Activated CD4-positive, alpha-beta memory T cell treated with anti-CD3 and anti-CD28 coated beads for 36 hours (primary cell): ENCODE measurements at regions of chr2 and their contacts with region 1.

Region 1: DNA sequence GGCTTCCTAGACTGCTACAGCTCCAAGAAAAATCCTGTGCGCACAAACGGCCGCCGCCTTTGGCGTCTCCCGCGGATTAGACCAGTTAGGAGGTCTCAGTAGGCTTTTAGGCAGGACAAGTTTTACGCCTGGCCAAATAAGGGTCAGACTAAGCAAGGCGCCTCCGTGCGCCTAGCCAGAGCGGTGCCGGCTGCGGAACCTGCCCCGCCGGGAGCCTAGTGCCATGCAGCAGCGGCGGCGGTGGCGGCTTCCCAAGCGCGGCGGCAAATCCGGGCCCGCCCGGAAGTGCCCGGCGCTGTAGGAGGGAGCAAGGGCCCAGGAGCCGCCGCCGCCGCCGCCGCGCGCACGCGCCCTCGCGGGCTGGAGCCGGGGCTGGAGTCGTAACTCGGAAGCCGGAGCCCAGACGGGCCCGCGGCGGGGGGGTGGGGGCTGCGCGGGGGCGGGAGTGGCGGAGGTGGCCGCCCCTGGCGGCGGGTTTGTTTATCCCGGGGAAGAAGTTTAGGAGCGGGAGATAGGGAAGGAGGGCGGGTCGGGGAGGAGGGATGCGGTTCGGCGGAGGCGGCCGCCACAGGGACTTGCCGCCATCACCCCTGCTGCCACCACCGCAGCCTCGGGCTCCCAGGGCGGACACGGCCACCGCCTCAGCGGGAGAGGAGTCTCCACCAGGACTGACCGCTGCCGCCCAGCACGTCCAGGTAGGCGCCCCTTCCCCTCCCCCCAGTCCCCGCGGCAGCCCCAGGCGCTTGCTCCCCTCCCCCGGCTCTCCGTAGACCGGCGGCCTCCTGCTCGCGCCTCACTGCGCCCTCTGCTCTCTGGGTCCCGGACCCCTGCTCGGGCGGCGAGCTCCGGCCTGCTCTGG is at the start of gene SPOPL:
- DNase-seq: peak; percentile 90
- H3K4me3 Mint-ChIP-seq: peak within 1 kb of the TSS; percentile 99
- H3K27ac Mint-ChIP-seq: peak within 1 kb of the TSS; percentile 86
- H3K4me1 Mint-ChIP-seq: peaks cover 39% of the 10 kb centered on the region
- H3K27me3 Mint-ChIP-seq: no peaks in the 10 kb centered on the region
- total RNA-seq, gene SPOPL: 10.6 to 12.3 TPM

Region 2: GRCh38 chr2:137947728-137948336 is 553.8 kb before region 1 on chr2:
- CTCF ChIA-PET with region 1: no interaction called
- POLR2A ChIA-PET with region 1: no interaction called
- intact Hi-C with region 1: loop called (anchors 10 kb)
- DNase-seq: peak; percentile 42
- H3K4me3 Mint-ChIP-seq: no peak overlapping the region
- H3K27ac Mint-ChIP-seq: no peak overlapping the region
- H3K4me1 Mint-ChIP-seq: peaks cover 5% of the 10 kb centered on the region
- H3K27me3 Mint-ChIP-seq: no peaks in the 10 kb centered on the region

Region 3: GRCh38 chr2:138430181-138430580 is 71.5 kb before region 1 on chr2:
- CTCF ChIA-PET with region 1: no interaction called
- POLR2A ChIA-PET with region 1: no interaction called
- intact Hi-C with region 1: loop called (anchors 1 kb)
- DNase-seq: no peak
- H3K4me3 Mint-ChIP-seq: no peak overlapping the region
- H3K27ac Mint-ChIP-seq: no peak overlapping the region
- H3K4me1 Mint-ChIP-seq: peaks cover 3% of the 10 kb centered on the region
- H3K27me3 Mint-ChIP-seq: no peaks in the 10 kb centered on the region

Region 4: GRCh38 chr2:138516030-138516704 is 14.5 kb after region 1 on chr2:
- CTCF ChIA-PET with region 1: no interaction called
- POLR2A ChIA-PET with region 1: interaction called, 5 read pairs
- intact Hi-C with region 1: loop called (anchors 1 kb)
- DNase-seq: no peak
- H3K4me3 Mint-ChIP-seq: no peak overlapping the region
- H3K27ac Mint-ChIP-seq: no peak overlapping the region
- H3K4me1 Mint-ChIP-seq: peaks cover 42% of the 10 kb centered on the region
- H3K27me3 Mint-ChIP-seq: peaks cover 4% of the 10 kb centered on the region

Region 5: DNA sequence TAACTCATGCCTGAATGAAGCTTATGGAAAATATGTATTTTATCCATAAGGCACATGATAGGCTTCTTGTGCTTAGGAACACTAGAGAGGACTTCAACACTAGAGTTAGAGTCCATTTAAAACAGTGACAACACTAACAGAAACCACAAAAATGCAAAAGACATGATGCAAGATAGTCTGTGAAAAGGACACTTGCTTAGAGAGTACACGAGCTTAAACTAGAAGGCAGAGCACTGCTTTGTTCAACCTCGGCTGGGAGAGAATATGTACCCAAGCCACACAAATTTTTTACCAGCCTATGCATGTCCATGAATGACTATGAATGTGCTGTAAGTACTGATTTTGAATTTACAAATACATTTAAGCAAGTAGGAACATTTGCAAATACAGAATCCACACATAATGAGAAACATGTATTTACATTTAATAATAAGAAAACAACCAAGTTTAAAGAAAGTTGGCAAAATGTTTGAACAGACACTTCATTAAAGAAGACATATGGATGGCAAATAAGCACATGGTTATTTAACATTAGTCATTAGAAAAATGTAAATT is 130.5 kb after region 1 on chr2:
- CTCF ChIA-PET with region 1: no interaction called
- POLR2A ChIA-PET with region 1: no interaction called
- intact Hi-C with region 1: no loop called
- DNase-seq: no peak
- H3K4me3 Mint-ChIP-seq: no peak overlapping the region
- H3K27ac Mint-ChIP-seq: no peak overlapping the region
- H3K4me1 Mint-ChIP-seq: no peaks in the 10 kb centered on the region
- H3K27me3 Mint-ChIP-seq: peaks cover 6% of the 10 kb centered on the region